ENCODE measurements at regions of chr18 and their contacts with region 1.

Region 1: GRCh38 chr18:22734776-22735627 is 198.1 kb upstream of the RBBP8 start:
- DNase-seq: no peak
- H3K4me3 ChIP-seq: no peak overlapping the region
- H3K27ac ChIP-seq: no peak overlapping the region
- H3K27me3 ChIP-seq: peaks cover 0 to 3% (median 0%) of the 10 kb centered on the region in 45 donors
- CTCF ChIP-seq: no peak

Region 2: DNA sequence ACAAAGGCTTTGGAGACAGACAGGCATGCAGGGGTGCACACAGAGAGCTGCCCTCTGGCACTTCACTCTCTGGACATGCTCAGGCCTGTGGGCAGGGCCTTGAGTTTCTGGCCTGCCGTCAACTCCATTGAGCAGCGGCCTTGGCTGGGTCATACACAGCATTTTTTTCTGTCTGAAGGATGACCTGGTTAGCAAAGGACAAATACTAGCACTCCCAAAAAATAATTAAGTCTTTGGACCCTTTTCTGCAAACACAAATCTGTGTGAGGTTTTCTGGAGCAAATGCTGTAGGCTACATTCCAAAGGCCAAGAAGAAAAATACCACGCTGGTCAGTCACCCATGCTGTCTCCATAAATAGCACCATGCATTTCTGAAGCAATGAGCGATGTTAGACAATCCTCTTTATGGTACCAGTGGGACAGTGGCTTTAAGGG is 192.6 kb before region 1 on chr18:
- intact Hi-C with region 1: no loop called
- DNase-seq: no peak
- H3K4me3 ChIP-seq: no peak overlapping the region
- H3K27ac ChIP-seq: no peak overlapping the region
- H3K27me3 ChIP-seq: peaks cover 0 to 7% (median 0%) of the 10 kb centered on the region in 45 donors
- CTCF ChIP-seq: no peak

Region 3: DNA sequence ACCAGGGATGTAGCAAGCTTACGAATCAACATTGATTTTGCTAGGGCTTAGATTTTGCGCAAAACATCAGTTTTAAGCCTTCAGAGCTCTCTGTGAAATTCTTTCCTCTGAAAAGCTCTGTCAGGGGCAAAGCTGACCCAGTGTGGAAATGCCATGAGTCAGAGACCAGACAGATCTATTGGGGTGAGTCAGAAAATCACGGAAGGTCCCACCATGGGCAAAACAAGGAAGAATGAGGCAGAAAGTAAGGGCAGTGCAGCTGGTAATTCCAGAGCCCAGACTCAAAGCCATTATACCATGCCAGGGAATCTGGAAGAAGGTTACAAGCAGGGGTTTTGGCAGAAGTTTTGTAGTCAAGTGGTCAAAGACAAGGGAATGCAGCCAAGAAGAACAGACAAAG is 60.7 kb before region 1 on chr18:
- intact Hi-C with region 1: loop called in 1 of 2 experiments (anchors 10 kb)
- DNase-seq: no peak
- H3K4me3 ChIP-seq: no peak overlapping the region
- H3K27ac ChIP-seq: no peak overlapping the region
- H3K27me3 ChIP-seq: peaks cover 0 to 17% (median 0%) of the 10 kb centered on the region in 45 donors
- CTCF ChIP-seq: no peak